GM18951 (cell line): ENCODE measurements at regions of chr6 and their contacts with region 1.

Region 1: DNA sequence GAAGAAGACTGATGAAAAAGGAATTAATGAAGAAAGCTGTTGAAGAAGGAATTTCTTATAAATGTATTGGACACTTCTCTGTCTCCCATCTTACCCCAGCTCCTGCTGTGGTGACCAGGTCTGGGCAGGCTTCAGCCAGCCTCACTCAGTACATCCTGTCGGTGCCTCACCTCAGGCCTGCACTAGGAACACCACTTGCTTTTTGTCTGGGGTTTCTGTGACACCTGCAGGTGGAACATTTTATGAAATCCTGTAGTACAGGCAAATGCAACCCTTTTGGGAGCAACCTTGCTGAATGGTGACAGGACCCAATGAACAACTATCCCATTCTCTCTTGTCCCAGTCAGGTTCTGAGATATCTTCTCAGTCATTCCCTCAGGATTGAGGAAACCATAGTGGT is 129.7 kb downstream of the PRDM13 start:
- POLR2A ChIP-seq: no peak

Region 2: DNA sequence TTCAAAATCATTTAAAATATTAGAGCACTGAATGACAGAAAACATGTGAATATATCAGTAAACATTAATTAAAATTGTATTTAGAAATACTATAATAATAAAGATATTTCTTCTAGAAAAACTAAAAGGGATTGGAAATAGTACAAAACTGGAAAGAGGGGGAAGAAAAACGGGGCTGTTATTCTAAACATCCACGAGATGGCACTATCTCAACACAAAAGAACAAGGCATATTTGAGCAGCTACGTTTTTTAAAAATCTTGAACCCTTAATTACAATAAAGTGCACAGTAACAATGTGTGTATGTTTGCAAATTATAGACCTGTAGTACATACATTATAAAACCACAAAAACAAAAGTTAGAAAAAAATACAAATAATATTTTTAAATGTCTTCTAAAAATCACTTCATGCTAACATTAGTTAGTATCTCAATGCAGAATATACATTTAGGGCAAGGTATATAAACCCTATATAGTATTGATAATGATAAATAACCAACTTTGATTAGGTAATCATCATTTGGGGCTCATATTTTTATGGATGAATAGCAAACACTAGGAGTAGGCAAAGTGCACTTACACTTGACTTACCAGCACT is 268.7 kb before region 1 on chr6:
- in situ Hi-C with region 1: loop called (anchors 5 kb)
- POLR2A ChIP-seq: no peak

Region 3: DNA sequence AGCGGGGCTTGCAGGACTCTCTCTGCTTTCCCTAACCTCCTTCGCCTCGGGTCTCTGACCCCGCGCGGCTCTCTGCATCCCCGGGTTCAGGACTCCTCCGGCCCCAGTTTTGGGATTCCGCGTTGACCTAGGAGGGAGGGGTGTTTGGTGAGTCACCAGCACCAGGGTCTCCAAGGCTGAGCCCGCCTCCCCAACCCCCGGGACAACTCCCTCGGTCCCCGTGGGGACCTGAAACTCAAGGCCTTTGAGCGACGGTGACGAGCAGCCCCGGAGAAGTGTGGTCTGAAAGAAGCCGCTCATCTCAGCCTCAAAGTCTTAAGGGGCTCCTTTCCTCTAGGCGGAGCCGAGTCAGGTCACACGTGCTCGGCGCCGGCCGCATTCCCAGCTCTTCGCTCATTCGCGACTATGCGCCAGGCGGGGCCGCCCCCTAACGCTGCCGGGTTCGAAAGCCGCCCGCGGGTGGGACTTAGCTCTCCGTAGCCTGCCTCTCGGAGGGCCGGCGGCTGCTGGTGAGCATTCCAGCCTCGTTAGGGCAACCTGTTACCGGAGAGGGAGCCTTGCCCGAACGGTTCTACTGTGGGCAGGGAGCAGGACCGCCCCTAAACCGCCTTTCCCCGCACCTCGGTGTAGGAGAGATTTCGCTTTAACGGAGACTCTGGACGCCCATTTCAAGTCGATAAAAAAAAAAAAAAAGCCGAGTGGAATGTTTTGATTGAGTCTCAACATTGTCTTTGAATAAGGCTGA is 132.7 kb before region 1 on chr6:
- in situ Hi-C with region 1: no loop called
- POLR2A ChIP-seq: no peak